B cell (primary cell): ENCODE measurements at regions of chr5 and their contacts with region 1.

Region 1: DNA sequence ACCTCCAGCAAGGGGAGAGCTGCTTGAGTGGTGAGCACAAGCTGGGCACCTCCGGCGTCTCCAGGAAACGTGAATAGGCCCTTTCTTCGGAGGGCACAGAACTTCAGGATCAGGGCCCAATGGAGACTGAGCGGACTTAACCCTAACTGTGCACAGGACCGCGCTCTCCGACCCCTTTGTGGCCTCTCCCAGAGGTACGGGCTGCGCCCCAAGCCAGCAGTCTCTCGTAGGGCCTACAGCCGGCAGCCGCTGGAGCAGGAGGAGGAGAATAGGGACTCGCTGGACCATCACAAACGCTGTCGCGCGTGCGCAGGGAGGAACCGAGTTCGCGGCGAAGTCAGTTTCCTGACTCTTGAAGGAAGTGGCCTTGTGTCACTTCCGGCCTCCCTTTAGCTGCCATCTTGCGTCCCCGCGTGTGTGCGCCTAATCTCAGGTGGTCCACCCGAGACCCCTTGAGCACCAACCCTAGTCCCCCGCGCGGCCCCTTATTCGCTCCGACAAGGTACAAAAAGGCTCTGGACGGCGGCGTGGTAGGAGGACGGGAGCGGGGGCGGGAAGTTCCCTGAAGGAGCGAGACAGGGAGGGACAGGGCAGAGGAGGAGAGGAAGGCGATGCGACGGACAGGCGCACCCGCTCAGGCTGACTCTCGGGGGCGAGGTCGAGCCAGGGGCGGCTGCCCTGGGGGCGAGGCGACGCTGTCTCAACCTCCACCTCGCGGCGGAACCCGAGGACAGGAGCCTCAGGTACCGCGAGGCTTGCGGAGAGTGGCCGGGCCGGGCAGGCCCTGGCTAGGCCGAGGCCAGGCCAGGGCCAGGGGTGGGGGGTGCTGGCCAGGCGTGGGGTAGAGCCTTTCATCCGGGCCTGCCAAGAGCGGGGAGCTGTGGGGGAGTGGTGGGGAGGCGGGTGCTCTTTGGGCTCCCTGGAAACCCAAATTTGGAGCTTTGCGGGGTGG is at the start of gene BTF3:
- DNase-seq: peak; percentile 96
- ATAC-seq: peak; percentile 95
- H3K4me3 ChIP-seq: peak within 1 kb of the TSS; percentile 60 to 98 (median 97)
- H3K4me3 Mint-ChIP-seq: peak within 1 kb of the TSS; percentile 99
- H3K27ac ChIP-seq: peak within 1 kb of the TSS; percentile 96 to 99
- H3K27ac Mint-ChIP-seq: peak within 1 kb of the TSS; percentile 99
- H3K4me1 ChIP-seq: peaks cover 19 to 33% of the 10 kb centered on the region in 2 donors
- H3K4me1 Mint-ChIP-seq: peaks cover 37% of the 10 kb centered on the region
- H3K27me3 ChIP-seq: no peaks in the 10 kb centered on the region
- H3K27me3 Mint-ChIP-seq: peaks cover 13% of the 10 kb centered on the region
- CTCF ChIP-seq: no peak
- total RNA-seq, gene BTF3: 452 and 466 TPM in 2 replicates

Region 2: DNA sequence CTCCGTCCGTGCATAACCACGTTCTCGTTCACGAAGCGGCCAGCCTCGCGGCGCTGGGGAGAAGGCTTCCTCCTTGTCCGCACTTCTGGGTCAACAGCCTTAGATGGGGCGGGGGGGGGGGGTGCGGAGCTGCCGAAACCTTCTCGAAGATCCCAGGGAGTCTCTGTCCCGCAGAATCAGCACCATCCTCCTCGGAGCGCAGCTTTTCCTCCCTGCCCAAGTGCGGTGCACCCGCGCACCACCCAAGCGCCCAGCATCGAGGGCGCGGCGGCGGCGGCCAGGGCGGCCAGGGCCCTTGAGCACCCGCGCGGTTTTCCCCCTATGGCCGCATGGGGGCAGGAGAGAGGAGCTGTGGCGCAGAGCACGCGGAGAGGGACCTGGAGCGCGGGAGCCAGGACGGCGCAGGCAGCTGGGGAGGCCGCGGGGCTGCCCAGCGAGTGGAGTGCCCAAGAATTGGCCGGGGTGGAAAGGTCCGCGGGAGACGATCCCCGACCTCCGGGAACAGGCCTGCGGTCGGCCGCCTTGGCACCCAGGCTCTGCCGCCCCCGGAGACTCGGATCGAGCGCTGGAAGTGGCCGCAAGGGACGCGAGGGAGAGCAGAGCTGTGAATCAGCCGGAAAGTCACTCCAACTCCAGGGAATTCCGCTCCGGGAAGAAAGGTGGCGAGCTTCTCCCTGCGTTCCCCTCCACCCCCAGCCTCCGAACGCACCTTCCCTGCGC is 282.3 kb before region 1 on chr5:
- CTCF ChIA-PET with region 1: no interaction called
- POLR2A ChIA-PET with region 1: no interaction called
- intact Hi-C with region 1: no loop called
- DNase-seq: peak; percentile 53
- ATAC-seq: peak; percentile 61
- H3K4me3 ChIP-seq: peak overlapping the region in 4 of 5 experiments; percentile 12 to 41 (median 34)
- H3K4me3 Mint-ChIP-seq: peak overlapping the region; percentile 73
- H3K27ac ChIP-seq: no peak overlapping the region
- H3K27ac Mint-ChIP-seq: no peak overlapping the region
- H3K4me1 ChIP-seq: peaks cover 10 to 16% of the 10 kb centered on the region in 2 donors
- H3K4me1 Mint-ChIP-seq: peaks cover 8% of the 10 kb centered on the region
- H3K27me3 ChIP-seq: peaks cover 0 to 51% (median 24%) of the 10 kb centered on the region in 4 experiments
- H3K27me3 Mint-ChIP-seq: peaks cover 69% of the 10 kb centered on the region
- CTCF ChIP-seq: peak; percentile 40

Region 3: GRCh38 chr5:73298772-73299630 is 199.3 kb before region 1 on chr5:
- CTCF ChIA-PET with region 1: no interaction called
- POLR2A ChIA-PET with region 1: no interaction called
- intact Hi-C with region 1: no loop called
- DNase-seq: no peak
- ATAC-seq: no peak
- H3K4me3 ChIP-seq: no peak overlapping the region
- H3K4me3 Mint-ChIP-seq: no peak overlapping the region
- H3K27ac ChIP-seq: no peak overlapping the region
- H3K27ac Mint-ChIP-seq: no peak overlapping the region
- H3K4me1 ChIP-seq: peaks cover 0 to 16% of the 10 kb centered on the region in 2 donors
- H3K4me1 Mint-ChIP-seq: peaks cover 5% of the 10 kb centered on the region
- H3K27me3 ChIP-seq: peaks cover 0 to 77% (median 59%) of the 10 kb centered on the region in 4 experiments
- H3K27me3 Mint-ChIP-seq: peaks cover 81% of the 10 kb centered on the region
- CTCF ChIP-seq: no peak

Region 4: DNA sequence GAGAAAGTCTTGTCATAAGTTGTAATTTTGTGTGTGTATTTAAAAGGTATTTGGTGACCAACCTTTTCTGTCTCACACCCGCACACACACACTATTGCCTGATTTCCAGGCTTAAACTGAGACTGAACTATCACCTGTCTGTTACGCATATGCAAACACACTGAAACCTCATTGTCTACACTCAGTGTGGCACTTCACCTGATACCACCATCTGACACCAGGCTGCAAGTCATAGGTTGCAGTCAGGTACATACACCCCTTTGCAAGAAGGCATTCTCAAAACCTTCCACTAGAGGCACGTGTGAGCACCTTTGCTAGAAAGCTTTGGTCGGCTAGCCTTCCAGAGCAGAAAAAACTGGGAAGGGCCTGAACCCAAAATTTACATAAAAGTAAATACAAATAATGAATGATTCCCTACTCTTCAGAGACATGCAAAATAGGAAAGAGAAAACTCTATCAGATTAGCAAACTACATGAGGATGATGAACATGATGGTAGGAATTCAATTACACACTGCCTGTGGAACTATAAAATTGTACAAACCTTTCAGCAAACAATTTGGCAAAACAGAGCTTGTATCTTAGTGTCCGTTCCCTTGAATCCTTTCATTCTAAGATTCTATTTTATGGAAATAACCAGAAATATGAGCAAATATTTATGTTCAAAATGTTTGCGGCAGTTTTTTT is 43.8 kb before region 1 on chr5:
- CTCF ChIA-PET with region 1: interaction called, 5 read pairs
- POLR2A ChIA-PET with region 1: no interaction called
- intact Hi-C with region 1: loop called (anchors 5 kb)
- DNase-seq: peak; percentile 62
- ATAC-seq: peak; percentile 68
- H3K4me3 ChIP-seq: no peak overlapping the region
- H3K4me3 Mint-ChIP-seq: no peak overlapping the region
- H3K27ac ChIP-seq: no peak overlapping the region
- H3K27ac Mint-ChIP-seq: no peak overlapping the region
- H3K4me1 ChIP-seq: peaks cover 10 to 23% of the 10 kb centered on the region in 2 donors
- H3K4me1 Mint-ChIP-seq: peaks cover 7% of the 10 kb centered on the region
- H3K27me3 ChIP-seq: peaks cover 4 to 68% (median 59%) of the 10 kb centered on the region in 4 experiments
- H3K27me3 Mint-ChIP-seq: peaks cover 67% of the 10 kb centered on the region
- CTCF ChIP-seq: peak; percentile 84